HCT116 (cell line): ENCODE measurements at regions of chr5 and their contacts with region 1.

Region 1: DNA sequence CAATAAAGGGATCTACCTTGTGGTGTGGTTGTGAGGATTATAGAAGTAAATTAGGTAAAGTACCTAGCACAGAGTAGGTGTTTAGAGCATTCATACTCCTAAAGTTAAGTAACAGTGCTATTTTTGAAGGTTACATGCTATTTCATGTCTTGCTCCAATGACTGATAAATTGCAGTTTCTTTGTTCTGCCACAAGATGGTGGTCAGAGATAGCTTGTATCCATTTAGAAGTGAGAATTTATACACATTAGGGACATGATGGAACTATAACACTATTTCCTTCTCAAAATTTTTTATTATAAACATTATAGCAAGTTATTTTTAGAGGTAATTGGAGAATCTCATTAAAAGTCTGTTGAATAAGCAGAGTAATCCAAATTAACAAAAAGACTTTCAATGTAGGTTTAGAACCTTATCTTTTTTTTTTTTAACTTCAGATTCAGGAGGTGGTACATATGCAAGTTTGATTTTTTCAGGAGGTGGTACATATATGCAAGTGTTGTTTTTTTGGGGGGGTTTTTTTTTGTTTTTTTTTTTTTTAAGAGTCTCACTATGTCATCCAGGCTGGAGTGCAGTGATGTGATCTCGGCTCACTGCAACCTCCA is 17.1 kb downstream of the MTREX start:
- DNase-seq: peak; percentile 32
- ATAC-seq: peak; percentile 72
- H3K4me3 ChIP-seq: no peak overlapping the region
- H3K27ac ChIP-seq: no peak overlapping the region
- H3K4me1 ChIP-seq: no peaks in the 10 kb centered on the region
- H3K27me3 ChIP-seq: no peaks in the 10 kb centered on the region
- CTCF ChIP-seq: peak; percentile 42 to 70 (median 48); a peak in 5 of 6 replicates
- POLR2A ChIP-seq: no peak
- RAD21 ChIP-seq: peak; percentile 69

Region 2: DNA sequence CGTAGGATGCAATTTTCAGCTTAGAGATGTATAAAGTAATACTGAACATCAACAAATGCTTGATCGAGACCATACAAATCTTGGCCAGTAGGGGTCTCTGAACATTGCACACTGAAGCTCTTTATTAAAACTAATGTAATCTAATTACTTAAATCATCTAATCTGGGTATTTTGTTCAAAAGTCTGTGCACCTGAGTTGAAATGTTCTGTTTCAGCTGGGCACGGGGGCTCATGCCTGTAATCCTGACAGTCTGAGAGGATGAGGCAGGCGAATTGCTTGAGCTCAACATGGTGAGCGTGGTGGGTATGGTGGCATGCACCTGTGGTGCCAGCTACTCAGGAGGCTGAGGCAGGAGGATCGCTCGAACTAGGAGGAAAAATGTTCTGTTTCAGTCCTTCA is 380.6 kb before region 1 on chr5:
- CTCF ChIA-PET with region 1: no interaction called
- POLR2A ChIA-PET with region 1: no interaction called
- RAD21 ChIA-PET with region 1: no interaction called
- intact Hi-C with region 1: no loop called
- DNase-seq: peak; percentile 12
- ATAC-seq: peak; percentile 73
- H3K4me3 ChIP-seq: no peak overlapping the region
- H3K27ac ChIP-seq: no peak overlapping the region
- H3K4me1 ChIP-seq: no peaks in the 10 kb centered on the region
- H3K27me3 ChIP-seq: peaks cover 7% of the 10 kb centered on the region; the same call in 1 of the 2 replicates
- CTCF ChIP-seq: peak; percentile 38 to 74 (median 59); a peak in 5 of 6 replicates
- POLR2A ChIP-seq: no peak
- RAD21 ChIP-seq: peak; percentile 46

Region 3: GRCh38 chr5:55187370-55187769 is 137.5 kb before region 1 on chr5:
- CTCF ChIA-PET with region 1: no interaction called
- POLR2A ChIA-PET with region 1: no interaction called
- RAD21 ChIA-PET with region 1: no interaction called
- intact Hi-C with region 1: loop called (anchors 5 kb)
- DNase-seq: peak; percentile 57
- ATAC-seq: peak; percentile 95
- H3K4me3 ChIP-seq: no peak overlapping the region
- H3K27ac ChIP-seq: no peak overlapping the region
- H3K4me1 ChIP-seq: no peaks in the 10 kb centered on the region
- H3K27me3 ChIP-seq: no peaks in the 10 kb centered on the region
- CTCF ChIP-seq: peak; percentile 44 to 57 (median 47); a peak in 4 of 6 replicates
- POLR2A ChIP-seq: no peak
- RAD21 ChIP-seq: peak; percentile 80

Region 4: DNA sequence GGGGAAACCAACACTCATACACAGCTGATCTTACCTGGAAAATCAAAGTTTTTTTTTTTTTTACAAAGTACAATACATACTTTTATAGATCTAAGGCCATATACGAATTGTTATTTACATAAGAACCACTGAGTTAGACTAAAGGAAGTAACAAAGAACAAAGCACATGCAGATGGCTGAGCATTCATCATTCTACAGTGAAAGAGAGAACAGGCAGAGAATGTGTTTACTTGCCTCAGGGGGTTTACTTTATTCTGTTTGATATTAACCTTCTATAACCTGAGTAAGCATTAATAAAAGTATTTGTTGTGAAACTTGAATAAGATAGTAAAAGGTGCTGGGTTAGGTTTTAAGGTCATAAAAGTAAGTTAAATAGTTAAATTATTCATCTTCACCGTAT is 332.5 kb after region 1 on chr5:
- CTCF ChIA-PET with region 1: no interaction called
- POLR2A ChIA-PET with region 1: no interaction called
- RAD21 ChIA-PET with region 1: no interaction called
- intact Hi-C with region 1: no loop called
- DNase-seq: no peak
- ATAC-seq: no peak
- H3K4me3 ChIP-seq: no peak overlapping the region
- H3K27ac ChIP-seq: no peak overlapping the region
- H3K4me1 ChIP-seq: no peaks in the 10 kb centered on the region
- H3K27me3 ChIP-seq: no peaks in the 10 kb centered on the region
- CTCF ChIP-seq: no peak
- POLR2A ChIP-seq: no peak
- RAD21 ChIP-seq: no peak

Region 5: GRCh38 chr5:55923177-55923771 is 598.4 kb after region 1 on chr5:
- CTCF ChIA-PET with region 1: no interaction called
- POLR2A ChIA-PET with region 1: no interaction called
- RAD21 ChIA-PET with region 1: no interaction called
- intact Hi-C with region 1: loop called (anchors 10 kb)
- DNase-seq: no peak
- ATAC-seq: no peak
- H3K4me3 ChIP-seq: no peak overlapping the region
- H3K27ac ChIP-seq: no peak overlapping the region
- H3K4me1 ChIP-seq: no peaks in the 10 kb centered on the region
- H3K27me3 ChIP-seq: no peaks in the 10 kb centered on the region
- CTCF ChIP-seq: no peak
- POLR2A ChIP-seq: no peak
- RAD21 ChIP-seq: no peak

Region 6: GRCh38 chr5:56656816-56657729 is 1332.2 kb after region 1 on chr5:
- CTCF ChIA-PET with region 1: no interaction called
- POLR2A ChIA-PET with region 1: no interaction called
- RAD21 ChIA-PET with region 1: no interaction called
- intact Hi-C with region 1: no loop called
- DNase-seq: no peak
- ATAC-seq: peak; percentile 53
- H3K4me3 ChIP-seq: no peak overlapping the region
- H3K27ac ChIP-seq: no peak overlapping the region
- H3K4me1 ChIP-seq: peaks cover 0 to 26% of the 10 kb centered on the region in 2 experiments; a peak in 2 of 4 replicates
- H3K27me3 ChIP-seq: peaks cover 4% of the 10 kb centered on the region; the same call in 1 of the 2 replicates
- CTCF ChIP-seq: no peak
- POLR2A ChIP-seq: no peak
- RAD21 ChIP-seq: no peak